ENCODE measurements at regions of chr6 and their contacts with region 1.

Region 1: DNA sequence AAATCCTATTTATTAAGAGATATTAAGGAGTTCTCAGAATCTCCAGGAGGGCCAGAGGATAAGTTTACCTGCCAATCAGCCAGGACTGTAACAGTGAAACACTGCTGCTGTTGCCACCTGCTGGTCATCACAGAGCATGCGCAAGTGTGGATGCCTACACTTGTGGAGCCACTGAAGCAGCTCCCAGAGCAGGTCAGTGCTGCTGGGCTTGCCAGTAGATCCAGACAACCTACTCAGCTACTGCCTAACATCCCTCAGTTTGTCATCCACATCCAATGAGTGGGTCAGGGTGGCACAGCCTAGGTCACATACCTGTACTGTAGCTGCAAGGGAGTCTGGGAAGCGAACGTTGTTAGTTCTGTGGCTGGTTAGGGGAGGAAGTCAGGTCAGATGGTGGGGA is 18.3 kb upstream of the NHSL1 start:
- DNase-seq: peak; percentile 9 to 73 (median 46)
- ATAC-seq: peak; percentile 78 to 87 (median 86)
- H3K4me3 ChIP-seq: no peak overlapping the region
- H3K4me3 Mint-ChIP-seq: no peak overlapping the region
- H3K27ac ChIP-seq: no peak overlapping the region
- H3K27ac Mint-ChIP-seq: peak overlapping the region in 1 of 2 donors; percentile 56
- H3K4me1 ChIP-seq: peaks cover 0 to 5% of the 10 kb centered on the region in 2 experiments
- H3K4me1 Mint-ChIP-seq: peaks cover 8 to 14% (median 12%) of the 10 kb centered on the region in 3 donors
- H3K27me3 ChIP-seq: peaks cover 0 to 2% of the 10 kb centered on the region in 2 experiments
- H3K27me3 Mint-ChIP-seq: peaks cover 7 to 16% of the 10 kb centered on the region in 2 donors

Region 2: DNA sequence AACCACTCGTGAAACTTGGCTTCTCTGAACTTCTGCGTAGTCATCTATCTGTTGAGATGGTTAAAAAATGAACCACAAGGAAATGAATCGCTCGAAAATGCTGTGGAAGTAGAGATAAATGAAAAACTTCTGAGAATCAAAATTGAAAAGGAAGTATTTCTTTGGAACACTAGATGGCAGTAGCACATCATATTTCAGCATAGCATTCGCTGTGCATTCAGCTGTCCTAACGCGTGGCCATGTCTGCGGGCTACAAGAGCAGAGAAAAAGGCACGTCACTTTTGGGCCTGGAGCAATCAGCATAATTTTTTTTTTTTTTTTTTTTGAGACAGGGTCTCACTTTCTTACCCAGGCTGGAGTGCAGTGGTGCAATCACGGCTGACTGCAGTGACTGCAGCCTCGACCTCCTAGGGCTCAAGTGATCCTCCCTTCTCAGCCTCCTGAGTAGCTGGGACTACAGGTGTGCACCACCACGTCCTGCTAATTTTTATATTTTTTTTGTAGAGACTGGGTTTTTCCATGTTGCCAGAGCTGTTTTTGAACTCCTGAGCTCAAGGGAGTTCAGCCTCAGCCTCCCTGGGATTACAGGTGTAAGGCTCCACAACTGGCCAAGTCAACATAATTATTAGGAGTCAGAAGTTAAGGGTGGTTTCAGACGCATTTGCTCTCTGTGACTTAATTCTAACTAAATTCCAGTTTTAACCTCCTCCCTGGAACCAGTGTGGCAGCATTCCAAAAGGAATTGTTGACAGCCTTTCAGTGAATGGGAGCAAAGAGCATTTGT is 401.6 kb before region 1 on chr6:
- CTCF ChIA-PET with region 1: interaction called, 3 to 22 read pairs
- POLR2A ChIA-PET with region 1: no interaction called
- DNase-seq: peak in 28 of 35 experiments; percentile 6 to 82 (median 26)
- ATAC-seq: peak; percentile 74 to 94 (median 86)
- H3K4me3 ChIP-seq: no peak overlapping the region
- H3K4me3 Mint-ChIP-seq: no peak overlapping the region
- H3K27ac ChIP-seq: no peak overlapping the region
- H3K27ac Mint-ChIP-seq: no peak overlapping the region
- H3K4me1 ChIP-seq: no peaks in the 10 kb centered on the region
- H3K4me1 Mint-ChIP-seq: peaks cover 6 to 7% (median 6%) of the 10 kb centered on the region in 3 donors
- H3K27me3 ChIP-seq: peaks cover 2 to 6% of the 10 kb centered on the region in 2 experiments
- H3K27me3 Mint-ChIP-seq: peaks cover 21 to 33% of the 10 kb centered on the region in 2 donors

Region 3: DNA sequence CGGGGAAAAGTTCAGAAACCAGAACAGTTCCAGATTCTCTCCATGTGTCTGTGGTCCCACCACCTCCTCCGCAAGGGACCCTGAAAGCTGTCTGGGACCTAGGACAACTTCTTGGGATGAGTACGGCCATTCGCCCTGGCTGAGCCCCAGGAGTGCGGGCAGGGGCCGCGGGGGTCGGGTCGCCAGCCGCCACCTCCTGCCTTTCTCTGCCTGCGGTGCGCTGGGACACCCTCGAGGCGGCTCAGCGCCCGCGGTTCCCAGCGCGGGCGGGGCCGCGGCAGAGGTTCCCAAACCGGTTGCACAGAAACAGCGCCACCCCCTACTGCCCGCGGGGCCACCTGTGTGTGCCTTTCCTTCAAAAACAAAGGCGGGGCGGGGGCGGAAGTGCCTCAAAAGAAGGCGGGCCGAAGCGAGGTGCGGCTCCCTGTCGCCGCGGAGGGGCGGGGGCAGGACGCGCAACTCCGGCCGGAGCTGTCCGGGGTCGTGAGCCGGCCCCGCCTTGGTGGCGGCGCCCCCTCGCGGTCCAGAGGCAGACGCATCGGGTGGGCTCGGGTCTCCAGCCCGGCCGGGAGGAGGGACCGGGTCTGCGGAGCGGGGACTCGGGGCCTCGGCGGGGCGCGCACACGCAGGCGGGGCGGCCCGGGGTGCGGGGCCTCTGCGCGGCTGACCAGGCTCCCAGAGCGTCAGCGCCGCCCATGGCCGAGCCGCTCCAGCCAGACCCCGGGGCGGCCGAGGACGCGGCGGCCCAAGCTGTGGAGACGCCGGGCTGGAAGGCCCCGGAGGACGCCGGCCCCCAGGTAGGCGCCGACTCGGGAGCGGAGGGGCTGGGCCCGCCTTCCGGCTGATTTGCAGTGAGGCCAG is 113.6 kb before region 1 on chr6 and contains the start of gene HEBP2:
- CTCF ChIA-PET with region 1: interaction called in 1 of 2 experiments, 12 read pairs
- POLR2A ChIA-PET with region 1: interaction called in 1 of 2 experiments, 8 read pairs
- DNase-seq: peak; percentile 73 to 96 (median 92)
- ATAC-seq: peak; percentile 91 to 95 (median 92)
- H3K4me3 ChIP-seq: peak within 1 kb of the TSS; percentile 94 to 95
- H3K4me3 Mint-ChIP-seq: peak within 1 kb of the TSS; percentile 78 to 86 (median 80)
- H3K27ac ChIP-seq: peak within 1 kb of the TSS; percentile 86
- H3K27ac Mint-ChIP-seq: peak within 1 kb of the TSS; percentile 82 to 87
- H3K4me1 ChIP-seq: peaks cover 4 to 22% of the 10 kb centered on the region in 2 experiments
- H3K4me1 Mint-ChIP-seq: peaks cover 18 to 33% (median 32%) of the 10 kb centered on the region in 3 donors
- H3K27me3 ChIP-seq: peaks cover 0 to 10% of the 10 kb centered on the region in 2 experiments
- H3K27me3 Mint-ChIP-seq: no peaks in the 10 kb centered on the region
- total RNA-seq, gene HEBP2: 18.8 to 54.0 (median 45.7) TPM

Region 4: DNA sequence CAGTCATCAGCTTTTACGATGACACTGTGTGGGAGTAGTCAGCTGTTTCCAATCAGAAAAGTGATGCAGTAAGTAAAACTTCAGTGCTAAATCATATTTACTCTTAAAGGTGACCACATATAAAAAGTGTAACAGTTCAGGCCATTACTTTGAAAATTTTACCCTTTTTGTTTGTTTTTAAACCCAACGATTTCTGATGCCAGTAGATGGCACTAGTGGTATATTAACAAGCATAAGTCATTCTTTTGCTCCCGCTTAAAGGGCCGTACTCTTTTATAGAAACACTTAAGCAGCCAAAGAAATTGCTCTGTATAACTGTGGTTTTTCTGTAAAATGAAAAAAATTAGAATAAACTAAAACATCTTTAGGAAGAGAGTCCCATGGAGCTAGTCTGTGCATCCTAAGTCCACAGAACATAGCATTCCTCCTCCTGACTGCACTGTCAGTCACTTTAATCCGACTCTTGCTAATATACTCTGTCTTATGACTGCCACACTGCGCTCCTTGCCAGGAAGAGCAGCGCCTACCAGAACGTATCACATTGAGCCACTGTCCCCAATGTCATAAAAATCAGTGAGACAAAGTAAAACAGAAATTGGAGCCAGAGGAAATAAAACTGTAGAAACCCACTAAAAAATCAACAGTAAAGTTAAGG is 88.6 kb before region 1 on chr6:
- CTCF ChIA-PET with region 1: interaction called, 30 to 65 read pairs
- POLR2A ChIA-PET with region 1: interaction called in 1 of 2 experiments, 3 read pairs
- DNase-seq: peak in 5 of 35 experiments; percentile 14 to 70 (median 18)
- ATAC-seq: peak; percentile 36 to 68 (median 49)
- H3K4me3 ChIP-seq: no peak overlapping the region
- H3K4me3 Mint-ChIP-seq: no peak overlapping the region
- H3K27ac ChIP-seq: no peak overlapping the region
- H3K27ac Mint-ChIP-seq: no peak overlapping the region
- H3K4me1 ChIP-seq: no peaks in the 10 kb centered on the region
- H3K4me1 Mint-ChIP-seq: peaks cover 0 to 3% (median 2%) of the 10 kb centered on the region in 3 donors
- H3K27me3 ChIP-seq: peaks cover 0 to 16% of the 10 kb centered on the region in 2 experiments
- H3K27me3 Mint-ChIP-seq: peaks cover 3 to 4% of the 10 kb centered on the region in 2 donors